Endothelial cell of umbilical vein (primary cell): ENCODE measurements at regions of chr14 and their contacts with region 1.

Region 1: DNA sequence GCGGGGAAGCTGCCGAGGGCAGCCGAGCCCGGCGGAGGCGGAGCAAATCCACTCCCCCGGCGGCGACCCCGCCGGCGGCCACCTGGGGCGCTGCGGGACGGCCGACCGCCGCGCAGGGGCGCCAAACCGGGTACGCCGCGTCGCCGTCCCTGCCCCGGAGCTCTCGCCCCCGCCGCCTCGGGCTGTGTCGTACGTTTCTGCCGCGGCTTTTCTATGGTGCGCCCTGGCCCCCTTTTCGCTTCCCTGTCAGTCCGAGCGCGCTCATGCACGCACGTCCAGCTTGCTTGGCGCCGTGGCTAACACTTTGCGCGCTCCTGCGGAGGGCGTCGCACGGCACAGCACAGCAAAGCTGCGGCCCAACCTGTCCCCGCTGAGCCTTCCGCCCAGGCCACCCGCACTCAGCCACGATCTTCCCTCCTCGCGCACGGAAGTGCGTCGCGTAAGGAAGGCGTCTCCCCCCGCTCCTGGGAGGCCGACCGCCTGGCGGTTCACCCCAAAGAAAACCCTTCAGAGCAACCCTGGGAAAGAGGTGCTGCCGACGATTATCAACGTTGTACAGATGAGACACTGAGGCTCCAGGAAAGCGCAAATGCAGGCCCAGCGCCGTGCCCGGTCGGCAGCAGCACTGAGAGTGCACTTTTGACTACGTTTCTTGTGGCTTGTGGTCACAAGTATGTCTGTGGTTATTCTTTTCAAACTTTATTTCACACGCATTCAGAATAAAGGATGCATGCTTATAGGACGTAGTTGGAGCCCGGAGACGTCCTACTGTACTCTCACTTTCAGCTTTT is at the start of gene HECTD1:
- DNase-seq: peak; percentile 89
- H3K4me3 ChIP-seq: peak within 1 kb of the TSS; percentile 51 to 96 (median 78)
- H3K27ac ChIP-seq: peak within 1 kb of the TSS; percentile 66
- H3K4me1 ChIP-seq: peaks cover 14% of the 10 kb centered on the region
- H3K27me3 ChIP-seq: no peaks in the 10 kb centered on the region
- CTCF ChIP-seq: peak; percentile 60 to 82
- POLR2A ChIP-seq: peak; percentile 68
- total RNA-seq, gene HECTD1: 173 and 181 TPM in 2 replicates

Region 2: DNA sequence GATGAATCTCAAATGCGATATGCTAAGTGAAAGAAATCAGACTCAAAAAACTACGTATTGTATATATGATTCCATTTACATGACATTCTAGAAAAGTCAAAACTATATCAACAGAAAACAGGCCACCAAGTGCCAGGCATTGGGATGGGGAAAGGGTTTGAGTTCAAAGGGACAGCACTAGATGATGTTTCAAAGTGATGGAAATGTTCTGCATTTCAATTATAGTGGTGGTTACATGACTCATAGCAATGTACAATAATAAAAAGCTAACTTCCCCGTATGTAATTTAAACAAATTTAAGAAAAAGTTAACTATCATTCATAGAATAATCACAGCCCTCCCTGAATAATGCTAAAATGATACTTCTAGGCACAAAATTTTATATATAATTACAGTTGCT is 13.9 kb before region 1 on chr14:
- CTCF ChIA-PET with region 1: interaction called, 24 read pairs
- POLR2A ChIA-PET with region 1: no interaction called
- dilution Hi-C with region 1: no loop called
- intact Hi-C with region 1: no loop called
- DNase-seq: no peak
- H3K4me3 ChIP-seq: no peak overlapping the region
- H3K27ac ChIP-seq: no peak overlapping the region
- H3K4me1 ChIP-seq: peaks cover 13% of the 10 kb centered on the region
- H3K27me3 ChIP-seq: no peaks in the 10 kb centered on the region
- CTCF ChIP-seq: no peak
- POLR2A ChIP-seq: no peak

Region 3: DNA sequence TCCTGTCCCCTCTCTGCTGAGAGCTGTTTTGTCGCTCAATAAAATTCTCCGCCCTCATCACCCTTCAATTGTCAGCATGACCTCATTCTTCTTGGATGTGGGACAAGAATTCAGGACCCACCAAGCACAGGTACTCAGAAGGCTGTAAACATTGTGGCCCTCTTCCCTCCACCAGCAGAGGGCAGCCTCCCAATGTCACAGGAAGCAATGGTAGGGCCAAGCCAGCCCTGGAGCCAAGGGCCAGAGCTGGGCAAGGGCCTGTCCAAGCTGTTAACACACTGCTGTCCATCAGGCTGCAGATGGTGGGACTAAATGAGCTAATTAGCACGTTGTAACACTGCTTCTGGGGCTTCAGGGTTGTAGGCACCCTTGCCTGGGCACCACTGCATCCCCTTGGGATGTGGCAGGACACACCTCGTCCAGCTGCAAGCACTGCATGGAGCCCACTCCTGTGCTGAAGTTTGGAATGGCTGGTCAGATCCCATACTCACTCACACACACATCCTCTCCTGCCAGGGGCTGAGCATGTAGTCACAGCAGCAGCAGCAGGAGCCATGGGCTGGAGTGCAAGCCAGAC is 62.3 kb after region 1 on chr14:
- CTCF ChIA-PET with region 1: interaction called, 25 read pairs
- POLR2A ChIA-PET with region 1: no interaction called
- dilution Hi-C with region 1: no loop called
- intact Hi-C with region 1: no loop called
- DNase-seq: no peak
- H3K4me3 ChIP-seq: no peak overlapping the region
- H3K27ac ChIP-seq: peak overlapping the region; percentile 21
- H3K4me1 ChIP-seq: peaks cover 9% of the 10 kb centered on the region
- H3K27me3 ChIP-seq: no peaks in the 10 kb centered on the region
- CTCF ChIP-seq: peak in 1 of 2 donors; percentile 24
- POLR2A ChIP-seq: no peak

Region 4: GRCh38 chr14:31326111-31326510 is 118.2 kb after region 1 on chr14:
- CTCF ChIA-PET with region 1: interaction called, 15 read pairs
- POLR2A ChIA-PET with region 1: no interaction called
- dilution Hi-C with region 1: no loop called
- intact Hi-C with region 1: loop called (anchors 2 kb)
- DNase-seq: peak; percentile 41
- H3K4me3 ChIP-seq: no peak overlapping the region
- H3K27ac ChIP-seq: no peak overlapping the region
- H3K4me1 ChIP-seq: no peaks in the 10 kb centered on the region
- H3K27me3 ChIP-seq: no peaks in the 10 kb centered on the region
- CTCF ChIP-seq: no peak
- POLR2A ChIP-seq: no peak

Region 5: GRCh38 chr14:31420319-31421111 is 212.6 kb after region 1 on chr14 and contains the start of gene HEATR5A:
- CTCF ChIA-PET with region 1: no interaction called
- POLR2A ChIA-PET with region 1: interaction called, 3 read pairs
- dilution Hi-C with region 1: no loop called
- intact Hi-C with region 1: loop called (anchors 2 kb)
- DNase-seq: peak; percentile 96
- H3K4me3 ChIP-seq: peak within 1 kb of the TSS; percentile 83 to 86 (median 83)
- H3K27ac ChIP-seq: peak within 1 kb of the TSS; percentile 60
- H3K4me1 ChIP-seq: peaks cover 13% of the 10 kb centered on the region
- H3K27me3 ChIP-seq: no peaks in the 10 kb centered on the region
- CTCF ChIP-seq: peak in 1 of 2 donors; percentile 27
- POLR2A ChIP-seq: peak; percentile 99
- total RNA-seq, gene HEATR5A: 37.0 and 45.3 TPM in 2 replicates